GM12878 (cell line): ENCODE measurements at regions of chr1 and their contacts with region 1.

Region 1: GRCh38 chr1:91165033-91165654 is 143.3 kb upstream of the ZNF644 start:
- DNase-seq: peak; percentile 11
- ATAC-seq: peak; percentile 99
- H3K4me3 ChIP-seq: no peak overlapping the region
- H3K27ac ChIP-seq: no peak overlapping the region
- H3K4me1 ChIP-seq: no peaks in the 10 kb centered on the region
- H3K27me3 ChIP-seq: no peaks in the 10 kb centered on the region; a peak in 1 of 4 replicates
- CTCF ChIP-seq: peak; percentile 92 to 99 (median 95)
- EP300 ChIP-seq: no peak
- POLR2A ChIP-seq: no peak
- RAD21 ChIP-seq: peak; percentile 88

Region 2: DNA sequence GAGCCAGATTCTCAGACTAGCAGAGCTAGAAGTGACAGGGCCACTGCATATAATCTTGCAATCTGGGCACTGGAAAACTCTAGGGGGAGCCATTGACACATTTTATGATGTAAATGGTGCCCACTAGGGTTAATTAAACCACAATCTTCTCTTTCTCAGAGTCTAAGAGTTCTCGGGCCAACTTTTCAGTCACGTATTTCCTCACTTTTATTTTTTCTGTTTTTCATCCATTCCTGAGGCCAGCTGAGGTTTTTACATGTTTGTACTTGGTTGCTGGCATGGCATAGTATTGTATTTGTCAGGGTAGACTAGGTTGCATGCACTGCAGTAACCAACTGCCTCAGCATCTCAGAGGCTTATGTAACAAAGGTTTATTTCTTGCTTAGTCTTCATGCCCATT is 1032.0 kb before region 1 on chr1:
- CTCF ChIA-PET with region 1: interaction called, 37 read pairs
- POLR2A ChIA-PET with region 1: no interaction called
- RAD21 ChIA-PET with region 1: interaction called, 13 read pairs
- SMC1A ChIA-PET with region 1: interaction called, 12 read pairs
- in situ Hi-C with region 1: no loop called
- intact Hi-C with region 1: no loop called
- DNase-seq: no peak
- ATAC-seq: peak; percentile 92
- H3K4me3 ChIP-seq: no peak overlapping the region
- H3K27ac ChIP-seq: no peak overlapping the region
- H3K4me1 ChIP-seq: no peaks in the 10 kb centered on the region
- H3K27me3 ChIP-seq: no peaks in the 10 kb centered on the region; a peak in 1 of 4 replicates
- CTCF ChIP-seq: peak; percentile 45 to 56 (median 47); a peak in 5 of 6 replicates
- EP300 ChIP-seq: no peak
- POLR2A ChIP-seq: no peak
- RAD21 ChIP-seq: peak; percentile 61

Region 3: DNA sequence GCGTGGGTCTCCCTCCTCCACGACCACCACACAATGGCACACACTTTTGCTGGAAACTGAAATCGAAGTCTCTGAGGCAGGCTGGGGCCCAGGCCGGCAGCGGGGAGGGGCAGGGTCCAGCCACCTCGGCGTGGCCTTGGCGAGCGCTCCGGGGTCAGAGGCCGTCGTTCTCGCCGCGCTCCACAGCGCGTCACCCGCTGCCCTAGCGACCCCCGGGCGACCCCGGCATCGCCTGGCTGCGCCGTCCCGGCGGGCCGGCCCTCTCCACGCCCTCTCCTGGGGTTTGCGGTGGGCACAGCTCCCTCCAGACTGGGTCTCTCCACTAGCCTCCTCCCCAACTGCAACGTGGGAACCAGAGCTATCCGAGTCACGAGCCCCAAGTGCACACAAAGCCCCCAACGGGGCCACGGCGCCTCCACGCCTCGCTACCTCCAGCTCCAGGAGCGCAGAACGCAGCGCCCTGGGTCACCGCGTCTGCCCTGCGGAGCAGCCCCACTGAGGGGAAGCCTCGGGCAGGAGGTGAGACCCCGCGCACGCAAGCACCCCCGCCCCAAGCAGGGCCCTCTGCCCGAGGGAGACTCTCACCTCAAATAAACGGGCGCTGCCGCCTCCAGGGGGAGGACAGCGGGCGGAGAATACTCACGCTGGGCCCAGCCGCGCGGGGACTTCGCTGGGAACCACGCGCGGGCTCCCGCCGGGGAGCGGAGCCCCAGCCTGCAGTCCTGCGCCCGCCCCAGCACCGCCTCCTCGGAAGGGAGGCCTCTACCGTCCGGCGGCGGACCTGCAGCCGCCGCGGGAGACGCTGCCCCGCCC is 314.0 kb before region 1 on chr1:
- CTCF ChIA-PET with region 1: interaction called, 16 read pairs
- POLR2A ChIA-PET with region 1: no interaction called
- RAD21 ChIA-PET with region 1: interaction called, 4 read pairs
- SMC1A ChIA-PET with region 1: interaction called, 7 read pairs
- in situ Hi-C with region 1: no loop called
- intact Hi-C with region 1: loop called (anchors 5 kb)
- DNase-seq: no peak
- ATAC-seq: peak; percentile 99
- H3K4me3 ChIP-seq: peak overlapping the region; percentile 88
- H3K27ac ChIP-seq: no peak overlapping the region
- H3K4me1 ChIP-seq: peaks cover 5% of the 10 kb centered on the region; the same call in 1 of the 2 replicates
- H3K27me3 ChIP-seq: peaks cover 0 to 9% of the 10 kb centered on the region in 2 experiments; a peak in 3 of 4 replicates
- CTCF ChIP-seq: peak; percentile 33 to 70 (median 66); a peak in 4 of 6 replicates
- EP300 ChIP-seq: 0 out of 4 replicates have a peak, but pooled peaks of 1 of the 2 experiments have one; percentile 10
- POLR2A ChIP-seq: 0 out of 2 replicates have a peak, but pooled peaks have one; percentile 25
- RAD21 ChIP-seq: 0 out of 2 replicates have a peak, but pooled peaks have one; percentile 25

Region 4: GRCh38 chr1:91021686-91022517 is 143.2 kb before region 1 on chr1 and contains the start of gene ZNF644:
- CTCF ChIA-PET with region 1: interaction called, 62 read pairs
- POLR2A ChIA-PET with region 1: no interaction called
- RAD21 ChIA-PET with region 1: interaction called, 46 read pairs
- SMC1A ChIA-PET with region 1: interaction called, 31 read pairs
- in situ Hi-C with region 1: no loop called
- intact Hi-C with region 1: loop called (anchors 1 kb)
- DNase-seq: peak; percentile 89
- ATAC-seq: peak; percentile 84
- H3K4me3 ChIP-seq: peak within 1 kb of the TSS; percentile 70
- H3K27ac ChIP-seq: peak within 1 kb of the TSS; percentile 97
- H3K4me1 ChIP-seq: peaks cover 12% of the 10 kb centered on the region
- H3K27me3 ChIP-seq: no peaks in the 10 kb centered on the region
- CTCF ChIP-seq: no peak
- EP300 ChIP-seq: peak in 1 of 2 experiments; percentile 18; a peak in 2 of 4 replicates
- POLR2A ChIP-seq: peak; percentile 90
- RAD21 ChIP-seq: no peak
- polyA plus RNA-seq, gene ZNF644: 28.1 to 34.4 TPM

Region 5: DNA sequence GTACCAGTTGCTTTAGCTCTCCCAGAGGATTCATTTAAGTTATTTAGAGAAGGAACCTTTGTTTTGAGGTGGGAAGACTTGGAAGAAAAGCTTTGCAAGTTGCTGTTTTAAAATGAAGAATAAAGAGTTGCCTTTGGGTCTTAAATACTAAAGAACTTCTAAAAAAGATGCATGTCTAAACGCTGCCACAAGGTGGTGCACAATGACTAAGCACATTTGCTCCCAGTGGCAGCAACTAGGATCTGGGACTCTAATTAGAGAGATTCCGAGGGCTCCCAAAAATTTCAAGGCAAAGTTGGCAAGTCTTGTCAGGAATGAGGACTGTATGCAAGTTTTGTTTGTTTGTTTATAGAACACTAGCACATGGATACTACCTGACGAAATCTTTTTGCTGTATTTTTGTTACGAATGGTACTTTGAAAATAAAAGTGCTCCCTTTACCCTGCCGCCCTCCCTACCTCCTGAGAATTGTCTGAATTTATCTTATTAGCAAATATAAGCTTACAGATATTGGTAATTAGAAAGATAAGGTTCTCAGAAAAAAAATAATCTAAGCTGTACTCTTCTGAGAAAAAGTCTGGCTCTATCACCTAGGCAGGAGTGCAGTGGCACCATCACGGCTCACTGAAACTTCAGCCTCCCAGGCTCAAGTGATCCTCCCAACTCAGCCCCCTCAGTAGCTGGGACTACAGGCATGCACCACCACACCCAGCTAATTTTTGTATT is 117.7 kb after region 1 on chr1:
- CTCF ChIA-PET with region 1: interaction called, 65 read pairs
- POLR2A ChIA-PET with region 1: no interaction called
- RAD21 ChIA-PET with region 1: interaction called, 44 read pairs
- SMC1A ChIA-PET with region 1: interaction called, 25 read pairs
- in situ Hi-C with region 1: no loop called
- intact Hi-C with region 1: loop called (anchors 2 kb)
- DNase-seq: peak; percentile 9
- ATAC-seq: peak; percentile 76
- H3K4me3 ChIP-seq: no peak overlapping the region
- H3K27ac ChIP-seq: no peak overlapping the region
- H3K4me1 ChIP-seq: no peaks in the 10 kb centered on the region
- H3K27me3 ChIP-seq: no peaks in the 10 kb centered on the region
- CTCF ChIP-seq: peak; percentile 71 to 75 (median 71)
- EP300 ChIP-seq: no peak
- POLR2A ChIP-seq: no peak
- RAD21 ChIP-seq: peak; percentile 84

Region 6: GRCh38 chr1:91673613-91674012 is 508.5 kb after region 1 on chr1:
- CTCF ChIA-PET with region 1: no interaction called
- POLR2A ChIA-PET with region 1: no interaction called
- RAD21 ChIA-PET with region 1: no interaction called
- SMC1A ChIA-PET with region 1: no interaction called
- in situ Hi-C with region 1: no loop called
- intact Hi-C with region 1: no loop called
- DNase-seq: no peak
- ATAC-seq: peak; percentile 21; the same call in 1 of the 3 replicates
- H3K4me3 ChIP-seq: no peak overlapping the region
- H3K27ac ChIP-seq: no peak overlapping the region
- H3K4me1 ChIP-seq: no peaks in the 10 kb centered on the region
- H3K27me3 ChIP-seq: no peaks in the 10 kb centered on the region
- CTCF ChIP-seq: no peak
- EP300 ChIP-seq: no peak
- POLR2A ChIP-seq: no peak
- RAD21 ChIP-seq: no peak

Region 7: DNA sequence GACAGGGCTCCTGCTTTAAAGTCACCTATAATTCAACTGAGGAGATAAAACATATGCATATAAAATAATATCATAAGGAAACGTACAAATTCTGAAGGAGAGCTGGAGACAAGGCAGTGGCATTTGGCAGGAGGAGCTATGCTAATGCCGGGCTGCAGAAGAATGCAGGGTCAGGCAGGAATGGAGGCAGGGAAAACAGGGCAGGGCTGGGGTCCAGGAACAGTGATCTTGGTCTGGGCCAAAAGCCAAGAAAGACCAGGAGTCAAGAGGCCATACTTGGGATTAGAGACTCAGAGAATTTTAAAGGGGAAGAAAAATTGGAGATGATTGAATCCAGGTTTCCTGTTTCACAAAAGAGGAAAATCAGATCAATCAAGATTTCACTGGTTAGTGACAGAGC is 764.1 kb after region 1 on chr1:
- CTCF ChIA-PET with region 1: interaction called, 10 read pairs
- POLR2A ChIA-PET with region 1: no interaction called
- RAD21 ChIA-PET with region 1: interaction called, 3 read pairs
- SMC1A ChIA-PET with region 1: interaction called, 3 read pairs
- in situ Hi-C with region 1: loop called (anchors 10 kb)
- intact Hi-C with region 1: loop called (anchors 5 kb)
- DNase-seq: no peak
- ATAC-seq: no peak
- H3K4me3 ChIP-seq: no peak overlapping the region
- H3K27ac ChIP-seq: no peak overlapping the region
- H3K4me1 ChIP-seq: no peaks in the 10 kb centered on the region
- H3K27me3 ChIP-seq: no peaks in the 10 kb centered on the region
- CTCF ChIP-seq: no peak
- EP300 ChIP-seq: no peak
- POLR2A ChIP-seq: no peak
- RAD21 ChIP-seq: no peak